ENCODE measurements at regions of chr18 and their contacts with region 1.

Region 1: GRCh38 chr18:58455314-58456188 is 173.3 kb downstream of the ALPK2 start:
- DNase-seq: no peak
- ATAC-seq: peak; percentile 56; the same call in 2 of the 3 replicates
- H3K4me3 ChIP-seq: no peak overlapping the region
- H3K27ac ChIP-seq: no peak overlapping the region
- H3K4me1 ChIP-seq: peaks cover 52% of the 10 kb centered on the region
- H3K27me3 ChIP-seq: no peaks in the 10 kb centered on the region
- CTCF ChIP-seq: no peak
- EP300 ChIP-seq: no peak
- POLR2A ChIP-seq: no peak
- RAD21 ChIP-seq: no peak

Region 2: GRCh38 chr18:58338961-58339592 is 116.5 kb before region 1 on chr18:
- CTCF ChIA-PET with region 1: no interaction called
- POLR2A ChIA-PET with region 1: no interaction called
- in situ Hi-C with region 1: no loop called
- intact Hi-C with region 1: no loop called
- DNase-seq: no peak
- ATAC-seq: no peak
- H3K4me3 ChIP-seq: no peak overlapping the region
- H3K27ac ChIP-seq: no peak overlapping the region
- H3K4me1 ChIP-seq: no peaks in the 10 kb centered on the region
- H3K27me3 ChIP-seq: no peaks in the 10 kb centered on the region
- CTCF ChIP-seq: no peak
- EP300 ChIP-seq: no peak
- POLR2A ChIP-seq: no peak
- RAD21 ChIP-seq: no peak

Region 3: GRCh38 chr18:58402247-58402646 is 53.3 kb before region 1 on chr18:
- CTCF ChIA-PET with region 1: no interaction called
- POLR2A ChIA-PET with region 1: interaction called, 7 read pairs
- in situ Hi-C with region 1: no loop called
- intact Hi-C with region 1: loop called (anchors 10 kb)
- DNase-seq: peak; percentile 58
- ATAC-seq: no peak
- H3K4me3 ChIP-seq: no peak overlapping the region
- H3K27ac ChIP-seq: peak overlapping the region; percentile 98
- H3K4me1 ChIP-seq: peaks cover 100% of the 10 kb centered on the region
- H3K27me3 ChIP-seq: no peaks in the 10 kb centered on the region
- CTCF ChIP-seq: no peak
- EP300 ChIP-seq: no peak
- POLR2A ChIP-seq: no peak
- RAD21 ChIP-seq: no peak

Region 4: DNA sequence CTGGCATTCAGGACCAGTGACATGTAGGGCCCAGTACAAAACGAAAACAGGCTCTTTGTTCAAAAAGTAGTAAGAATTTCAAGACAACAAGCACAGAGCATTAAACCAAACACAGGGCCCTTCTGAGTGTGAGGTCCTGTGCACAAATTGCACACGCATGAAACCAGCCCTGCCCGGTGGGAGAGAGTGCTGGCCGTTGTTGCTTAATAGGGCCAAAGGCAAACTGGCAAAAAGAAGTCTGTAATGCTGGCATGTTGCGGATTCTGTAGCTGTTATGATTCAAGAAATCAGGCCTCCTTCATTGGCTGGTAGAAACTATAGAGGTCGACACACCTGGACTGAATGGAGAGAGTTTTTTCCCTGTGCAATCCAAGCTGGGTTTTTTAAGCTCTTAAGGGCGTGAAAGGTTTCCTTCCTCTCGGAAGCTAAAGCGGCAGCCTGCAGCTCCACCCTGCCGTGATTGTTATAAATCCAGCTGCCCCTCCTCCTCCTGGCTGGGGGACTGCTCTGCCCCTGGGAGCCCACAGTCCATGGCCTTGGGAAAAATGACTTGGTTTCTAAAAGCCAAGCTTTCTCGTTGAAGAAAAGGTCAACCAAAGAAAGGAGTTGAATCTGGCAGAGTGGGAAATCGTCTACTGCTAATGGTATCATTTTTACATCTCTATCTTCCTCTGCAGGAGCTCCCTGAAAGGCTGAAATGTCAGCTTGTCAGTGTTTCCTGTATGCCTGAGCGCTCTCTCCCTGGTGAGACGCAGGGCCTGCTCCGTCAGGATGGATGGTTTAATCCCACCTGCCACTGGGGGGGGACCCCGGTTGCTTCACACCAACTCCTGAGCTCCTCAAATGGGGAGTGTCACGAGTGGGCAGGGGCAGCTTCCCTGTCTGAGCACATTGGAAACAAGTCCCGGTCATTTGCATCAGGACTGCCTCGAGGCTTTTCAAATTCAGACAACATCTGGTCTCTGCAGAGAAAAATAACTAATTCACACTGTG is 29.7 kb after region 1 on chr18:
- CTCF ChIA-PET with region 1: no interaction called
- POLR2A ChIA-PET with region 1: no interaction called
- in situ Hi-C with region 1: loop called (anchors 5 kb)
- intact Hi-C with region 1: no loop called
- DNase-seq: no peak
- ATAC-seq: peak; percentile 40
- H3K4me3 ChIP-seq: no peak overlapping the region
- H3K27ac ChIP-seq: peak overlapping the region; percentile 55
- H3K4me1 ChIP-seq: peaks cover 81% of the 10 kb centered on the region
- H3K27me3 ChIP-seq: no peaks in the 10 kb centered on the region
- CTCF ChIP-seq: no peak
- EP300 ChIP-seq: no peak
- POLR2A ChIP-seq: no peak
- RAD21 ChIP-seq: no peak

Region 5: GRCh38 chr18:58496937-58497336 is 41.4 kb after region 1 on chr18:
- CTCF ChIA-PET with region 1: no interaction called
- POLR2A ChIA-PET with region 1: no interaction called
- in situ Hi-C with region 1: no loop called
- intact Hi-C with region 1: no loop called
- DNase-seq: peak; percentile 58
- ATAC-seq: peak; percentile 55
- H3K4me3 ChIP-seq: no peak overlapping the region
- H3K27ac ChIP-seq: no peak overlapping the region
- H3K4me1 ChIP-seq: peaks cover 98% of the 10 kb centered on the region
- H3K27me3 ChIP-seq: no peaks in the 10 kb centered on the region
- CTCF ChIP-seq: peak; percentile 81
- EP300 ChIP-seq: no peak
- POLR2A ChIP-seq: no peak
- RAD21 ChIP-seq: peak; percentile 77

Measured in HepG2 (cell line).